GM10248 (cell line): ENCODE measurements at regions of chr5 and their contacts with region 1.

Region 1: GRCh38 chr5:18745646-18746615 is 1111.7 kb downstream of the TAF11L14 start:
- DNase-seq: peak; percentile 59
- CTCF ChIP-seq: no peak

Region 2: DNA sequence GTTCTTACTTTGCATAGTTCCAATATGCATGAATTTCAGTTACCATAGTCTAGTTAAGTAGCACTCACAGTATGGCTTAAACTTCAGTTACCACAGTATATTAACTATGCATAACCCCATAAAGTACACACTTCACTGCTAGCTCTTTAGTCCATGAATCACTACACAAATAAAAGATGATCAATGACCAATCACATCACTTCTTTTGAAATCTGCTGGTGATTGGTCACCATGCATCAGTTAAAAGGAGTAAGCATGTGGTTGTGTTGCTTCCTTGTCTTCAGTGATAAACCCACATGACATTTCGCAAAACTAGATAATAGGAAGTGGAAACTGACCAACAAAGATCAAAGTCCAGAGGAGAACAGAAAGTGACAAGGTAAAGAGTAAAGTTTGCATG is 1032.6 kb before region 1 on chr5:
- CTCF ChIA-PET with region 1: no interaction called
- POLR2A ChIA-PET with region 1: no interaction called
- DNase-seq: no peak
- CTCF ChIP-seq: no peak

Region 3: DNA sequence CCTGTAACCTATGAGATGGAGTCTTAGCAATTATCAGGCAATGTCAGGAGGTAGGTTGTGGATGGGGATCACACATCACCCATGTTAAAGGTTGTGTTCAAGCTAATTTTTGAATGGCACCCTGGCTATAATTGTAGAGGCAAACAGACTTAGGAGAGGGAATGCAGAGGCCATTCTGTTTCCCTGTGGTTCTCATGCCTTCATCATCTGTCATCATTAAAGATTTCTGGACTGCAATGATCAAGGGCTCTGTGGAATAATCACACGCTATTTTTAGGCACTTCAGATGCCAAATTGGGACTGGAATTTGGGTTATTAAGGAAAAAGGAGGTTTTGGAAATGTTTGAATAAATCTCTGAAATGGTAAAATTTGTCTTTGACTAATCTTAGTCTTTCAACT is 46.2 kb before region 1 on chr5:
- CTCF ChIA-PET with region 1: interaction called, 13 read pairs
- POLR2A ChIA-PET with region 1: no interaction called
- DNase-seq: no peak
- CTCF ChIP-seq: no peak